IMR-90 (cell line): ENCODE measurements at regions of chr16 and their contacts with region 1.

Region 1: DNA sequence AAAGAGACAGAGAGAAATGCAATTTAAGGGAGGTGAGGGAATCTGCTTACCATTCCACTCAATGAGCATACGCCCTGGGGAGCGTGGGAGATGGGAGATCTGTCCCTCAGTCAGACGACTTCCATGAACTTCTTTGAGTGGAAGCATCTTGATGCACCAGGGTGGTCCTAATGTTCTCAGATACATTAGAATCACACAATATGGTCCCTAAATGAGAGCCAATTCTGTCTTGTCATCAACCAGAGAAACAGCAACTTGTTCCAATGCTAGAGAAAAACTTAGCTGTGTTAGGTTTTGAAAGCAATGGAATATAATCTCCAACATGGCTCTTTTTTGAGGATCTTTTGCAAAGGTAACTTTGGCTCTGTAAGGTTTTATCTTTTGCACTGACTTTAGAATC is 44.1 kb downstream of the GPR139 start:
- DNase-seq: no peak
- ATAC-seq: no peak
- H3K4me3 ChIP-seq: no peak overlapping the region
- H3K27ac ChIP-seq: no peak overlapping the region
- H3K4me1 ChIP-seq: no peaks in the 10 kb centered on the region
- H3K27me3 ChIP-seq: no peaks in the 10 kb centered on the region
- CTCF ChIP-seq: no peak
- POLR2A ChIP-seq: no peak
- RAD21 ChIP-seq: no peak

Region 2: GRCh38 chr16:20137194-20137593 is 107.6 kb after region 1 on chr16:
- CTCF ChIA-PET with region 1: no interaction called
- POLR2A ChIA-PET with region 1: no interaction called
- dilution Hi-C with region 1: no loop called
- in situ Hi-C with region 1: loop called (anchors 10 kb)
- intact Hi-C with region 1: no loop called
- DNase-seq: no peak
- ATAC-seq: no peak
- H3K4me3 ChIP-seq: no peak overlapping the region
- H3K27ac ChIP-seq: no peak overlapping the region
- H3K4me1 ChIP-seq: no peaks in the 10 kb centered on the region
- H3K27me3 ChIP-seq: no peaks in the 10 kb centered on the region
- CTCF ChIP-seq: no peak
- POLR2A ChIP-seq: no peak
- RAD21 ChIP-seq: no peak